AG04450 (cell line): ENCODE measurements at regions of chr7 and their contacts with region 1.

Region 1: GRCh38 chr7:55415173-55415778 is 50.1 kb downstream of the LANCL2 start:
- DNase-seq: peak; percentile 48
- H3K4me3 ChIP-seq: no peak overlapping the region
- H3K27ac ChIP-seq: no peak overlapping the region
- H3K27me3 ChIP-seq: no peaks in the 10 kb centered on the region
- CTCF ChIP-seq: peak; percentile 84

Region 2: DNA sequence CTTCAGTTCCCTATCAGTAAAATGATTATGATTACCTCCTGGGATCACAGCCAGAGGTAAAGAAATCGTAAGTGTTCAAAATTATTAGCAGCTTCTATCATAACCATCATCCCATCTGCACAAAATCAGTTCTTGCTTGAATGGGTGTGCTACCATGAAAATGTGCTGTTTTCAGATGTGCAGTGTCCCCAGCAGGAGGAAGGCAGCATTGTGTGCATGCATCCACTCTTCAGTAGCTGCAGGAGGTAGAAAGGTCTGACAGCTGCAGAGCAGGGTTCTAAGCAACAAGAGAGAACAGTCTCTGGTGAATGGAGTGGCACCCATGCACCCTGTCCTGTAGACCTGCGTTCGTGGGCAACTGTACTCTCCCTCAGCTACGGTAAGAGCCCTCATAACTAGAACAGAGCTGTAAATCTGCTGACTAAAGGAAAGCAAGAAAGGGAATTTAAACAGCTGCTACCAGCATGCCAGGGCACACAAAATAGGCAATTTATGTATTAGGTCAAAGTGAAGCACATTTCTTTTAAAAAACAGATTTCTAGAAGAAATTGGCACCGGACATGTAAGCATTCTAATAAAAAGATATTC is 851.9 kb before region 1 on chr7:
- CTCF ChIA-PET with region 1: no interaction called
- POLR2A ChIA-PET with region 1: no interaction called
- DNase-seq: no peak
- H3K4me3 ChIP-seq: no peak overlapping the region
- H3K27ac ChIP-seq: no peak overlapping the region
- H3K27me3 ChIP-seq: no peaks in the 10 kb centered on the region
- CTCF ChIP-seq: no peak

Region 3: GRCh38 chr7:55280031-55280454 is 135.2 kb before region 1 on chr7:
- CTCF ChIA-PET with region 1: interaction called, 204 read pairs
- POLR2A ChIA-PET with region 1: no interaction called
- DNase-seq: peak; percentile 30
- H3K4me3 ChIP-seq: no peak overlapping the region
- H3K27ac ChIP-seq: no peak overlapping the region
- H3K27me3 ChIP-seq: peaks cover 22% of the 10 kb centered on the region
- CTCF ChIP-seq: peak; percentile 74

Region 4: GRCh38 chr7:55360486-55360885 is 54.8 kb before region 1 on chr7:
- CTCF ChIA-PET with region 1: interaction called, 10 read pairs
- POLR2A ChIA-PET with region 1: interaction called, 14 read pairs
- DNase-seq: no peak
- H3K4me3 ChIP-seq: no peak overlapping the region
- H3K27ac ChIP-seq: no peak overlapping the region
- H3K27me3 ChIP-seq: peaks cover 20% of the 10 kb centered on the region
- CTCF ChIP-seq: no peak

Region 5: GRCh38 chr7:55387062-55387965 is 28.0 kb before region 1 on chr7:
- CTCF ChIA-PET with region 1: interaction called, 10 read pairs
- POLR2A ChIA-PET with region 1: no interaction called
- DNase-seq: no peak
- H3K4me3 ChIP-seq: no peak overlapping the region
- H3K27ac ChIP-seq: no peak overlapping the region
- H3K27me3 ChIP-seq: no peaks in the 10 kb centered on the region
- CTCF ChIP-seq: no peak

Region 6: GRCh38 chr7:55432939-55433784 is 17.9 kb after region 1 on chr7:
- CTCF ChIA-PET with region 1: interaction called, 20 read pairs
- POLR2A ChIA-PET with region 1: no interaction called
- DNase-seq: no peak
- H3K4me3 ChIP-seq: no peak overlapping the region
- H3K27ac ChIP-seq: no peak overlapping the region
- H3K27me3 ChIP-seq: no peaks in the 10 kb centered on the region
- CTCF ChIP-seq: peak; percentile 58